Activated CD4-positive, alpha-beta T cell treated with anti-CD3 and anti-CD28 coated beads for 36 hours (primary cell): ENCODE measurements at regions of chr5 and their contacts with region 1.

Region 1: GRCh38 chr5:131382407-131383395 is 118.8 kb downstream of the CDC42SE2 start:
- DNase-seq: peak; percentile 57
- ATAC-seq: peak; percentile 67
- H3K4me3 Mint-ChIP-seq: peak overlapping the region; percentile 40
- H3K27ac Mint-ChIP-seq: peak overlapping the region; percentile 94
- H3K4me1 Mint-ChIP-seq: peaks cover 94% of the 10 kb centered on the region
- H3K27me3 Mint-ChIP-seq: no peaks in the 10 kb centered on the region

Region 2: DNA sequence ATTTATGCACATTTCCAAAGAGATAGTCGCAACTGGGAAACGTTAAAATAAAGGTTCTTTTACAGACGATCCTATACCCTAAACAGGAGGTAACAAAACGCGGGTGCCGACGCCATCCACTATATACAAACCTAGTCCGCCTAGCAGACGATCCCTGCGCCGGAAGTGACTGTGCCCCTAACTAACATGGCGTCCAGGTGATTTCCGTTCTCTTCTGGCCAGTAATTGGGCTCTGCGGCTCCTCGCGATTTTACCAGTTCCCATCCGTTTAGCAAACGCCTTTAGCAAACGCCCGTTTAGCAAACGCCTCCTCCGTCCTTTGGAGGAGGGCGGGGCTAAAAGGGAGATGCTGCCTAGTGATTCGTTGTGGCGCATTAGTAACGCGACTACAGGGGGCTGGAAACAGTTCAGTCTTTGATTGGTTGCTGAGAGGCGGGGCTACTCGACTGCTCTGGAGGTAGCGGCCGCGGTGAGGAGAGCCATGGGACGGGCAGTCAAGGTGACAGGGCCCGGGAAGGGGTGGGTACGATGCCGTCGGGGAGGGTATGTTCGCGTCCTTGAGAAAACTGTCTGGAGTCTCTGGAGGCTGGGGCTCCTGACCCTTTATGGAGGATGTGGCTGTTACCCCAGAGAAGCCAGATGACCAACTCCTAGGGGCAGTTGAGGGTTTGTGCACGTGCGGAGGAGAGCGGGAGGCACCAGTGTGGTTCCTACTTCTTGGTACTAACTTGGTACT is 212.0 kb before region 1 on chr5 and contains the start of gene LYRM7:
- CTCF ChIA-PET with region 1: interaction called, 3 read pairs
- POLR2A ChIA-PET with region 1: no interaction called
- intact Hi-C with region 1: loop called (anchors 1 to 2 kb)
- DNase-seq: peak; percentile 97
- ATAC-seq: peak; percentile 96
- H3K4me3 Mint-ChIP-seq: peak within 1 kb of the TSS; percentile 95
- H3K27ac Mint-ChIP-seq: peak within 1 kb of the TSS; percentile 93
- H3K4me1 Mint-ChIP-seq: peaks cover 34% of the 10 kb centered on the region
- H3K27me3 Mint-ChIP-seq: no peaks in the 10 kb centered on the region
- total RNA-seq, gene LYRM7: 16.0 to 20.7 TPM

Region 3: DNA sequence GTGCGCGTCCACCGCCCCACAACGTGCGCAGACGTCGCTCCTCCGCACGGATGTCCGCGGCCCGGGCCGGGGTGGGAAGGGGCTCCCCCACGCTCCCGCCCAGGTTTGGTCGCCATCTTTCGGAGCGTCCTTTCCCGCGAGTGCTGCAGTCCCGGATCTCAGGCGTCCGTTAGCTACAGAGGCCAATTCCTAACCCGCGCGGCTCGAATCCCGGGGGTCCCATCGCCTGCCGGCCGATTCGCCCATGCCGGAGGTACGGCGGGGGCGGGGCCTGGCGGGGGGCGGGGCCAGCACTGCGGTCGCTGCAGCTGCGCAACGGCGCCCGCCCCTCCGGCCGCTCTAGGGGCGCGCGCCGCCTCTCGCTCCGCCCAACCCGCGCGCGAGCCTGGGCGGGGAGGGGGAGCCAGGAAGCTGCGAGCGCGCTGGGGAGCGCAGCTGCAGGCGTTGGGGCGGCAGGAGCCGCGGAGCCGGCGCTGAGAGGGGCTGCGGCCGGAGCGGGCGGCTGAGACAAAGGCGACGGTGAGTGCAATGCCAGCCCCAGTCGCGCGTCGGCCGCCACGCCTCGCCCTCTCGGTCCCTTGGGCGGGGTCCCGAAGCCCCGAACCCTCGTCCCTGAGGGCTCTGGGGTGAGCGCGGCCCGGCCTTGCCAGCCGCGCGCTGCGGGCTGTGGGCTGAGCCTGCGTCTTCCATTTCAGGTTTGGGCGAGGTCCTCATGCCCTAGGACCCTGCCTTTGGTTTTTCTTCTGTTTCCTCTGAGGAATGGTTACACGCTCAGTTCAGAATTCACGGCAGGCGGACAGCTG is 118.9 kb before region 1 on chr5 and contains the start of gene CDC42SE2:
- CTCF ChIA-PET with region 1: interaction called, 46 read pairs
- POLR2A ChIA-PET with region 1: interaction called, 19 read pairs
- intact Hi-C with region 1: loop called in 1 of 2 experiments (anchors 1 kb)
- DNase-seq: peak; percentile 91
- ATAC-seq: peak; percentile 86
- H3K4me3 Mint-ChIP-seq: peak within 1 kb of the TSS; percentile 81
- H3K27ac Mint-ChIP-seq: peak within 1 kb of the TSS; percentile 96
- H3K4me1 Mint-ChIP-seq: peaks cover 44% of the 10 kb centered on the region
- H3K27me3 Mint-ChIP-seq: no peaks in the 10 kb centered on the region
- total RNA-seq, gene CDC42SE2: 68.3 to 99.6 TPM

Region 4: DNA sequence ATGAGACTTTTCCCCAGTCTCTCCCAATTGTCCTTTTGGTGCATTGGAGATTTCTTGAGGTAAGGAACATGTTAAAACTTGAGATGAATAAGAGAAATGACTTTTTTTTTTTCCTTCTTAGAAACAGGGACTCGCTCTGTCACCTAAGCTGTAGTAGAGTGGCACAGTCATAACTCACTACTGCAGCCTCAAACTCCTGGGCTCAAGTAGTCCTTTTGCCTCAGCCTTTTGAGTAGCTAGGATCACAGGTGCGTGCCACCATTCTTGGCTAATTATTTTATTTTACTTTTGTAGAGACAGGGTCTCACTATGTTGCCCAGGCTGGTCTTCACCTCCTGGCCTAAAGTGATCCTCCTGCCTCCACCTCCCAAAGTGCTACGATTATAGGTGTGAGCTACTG is 93.0 kb before region 1 on chr5:
- CTCF ChIA-PET with region 1: interaction called, 12 read pairs
- POLR2A ChIA-PET with region 1: interaction called, 14 read pairs
- intact Hi-C with region 1: loop called (anchors 2 kb)
- DNase-seq: peak; percentile 61
- ATAC-seq: peak; percentile 80
- H3K4me3 Mint-ChIP-seq: peak overlapping the region; percentile 64
- H3K27ac Mint-ChIP-seq: peak overlapping the region; percentile 98
- H3K4me1 Mint-ChIP-seq: peaks cover 72% of the 10 kb centered on the region
- H3K27me3 Mint-ChIP-seq: no peaks in the 10 kb centered on the region

Region 5: DNA sequence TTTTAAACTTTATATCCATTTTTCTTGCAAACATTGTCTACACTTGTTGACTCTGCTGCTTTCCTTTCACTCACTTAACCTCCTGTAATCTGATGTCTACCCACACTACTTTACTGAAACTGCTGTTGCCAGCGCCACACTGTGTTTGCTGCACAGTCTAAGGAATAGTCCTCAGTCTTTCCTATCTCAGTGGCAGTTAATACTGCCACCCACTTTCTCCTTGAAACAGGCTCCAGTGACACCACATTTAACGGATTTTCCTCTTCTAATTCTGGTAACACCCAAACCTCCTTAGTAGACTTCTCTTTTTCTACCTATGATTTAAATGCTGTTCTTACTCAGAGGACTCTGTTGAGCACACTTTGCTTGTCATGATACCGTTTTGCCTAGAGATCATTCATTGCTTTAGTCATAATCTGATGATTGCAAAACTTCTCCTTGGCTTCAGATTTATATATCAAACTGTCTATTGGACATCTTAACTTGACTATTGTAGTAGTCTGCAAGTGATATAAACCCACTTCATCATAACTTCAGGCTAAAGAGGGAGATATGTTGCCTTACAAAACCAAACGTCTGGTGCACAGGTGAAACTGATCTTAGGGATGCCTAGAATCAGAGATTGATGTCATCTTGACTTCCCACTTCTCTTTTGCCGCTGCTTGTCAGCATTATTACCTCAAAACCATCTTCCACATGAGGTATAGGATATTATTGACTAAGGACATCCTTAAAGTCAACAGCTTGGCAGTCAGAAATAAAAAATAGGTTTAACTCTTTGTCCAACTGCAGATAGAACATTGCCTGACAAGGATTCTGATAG is 24.8 kb before region 1 on chr5:
- CTCF ChIA-PET with region 1: interaction called, 13 read pairs
- POLR2A ChIA-PET with region 1: interaction called, 3 read pairs
- intact Hi-C with region 1: loop called (anchors 1 kb)
- DNase-seq: peak; percentile 66
- ATAC-seq: peak; percentile 91
- H3K4me3 Mint-ChIP-seq: peak overlapping the region; percentile 59
- H3K27ac Mint-ChIP-seq: peak overlapping the region; percentile 94
- H3K4me1 Mint-ChIP-seq: peaks cover 69% of the 10 kb centered on the region
- H3K27me3 Mint-ChIP-seq: no peaks in the 10 kb centered on the region

Region 6: DNA sequence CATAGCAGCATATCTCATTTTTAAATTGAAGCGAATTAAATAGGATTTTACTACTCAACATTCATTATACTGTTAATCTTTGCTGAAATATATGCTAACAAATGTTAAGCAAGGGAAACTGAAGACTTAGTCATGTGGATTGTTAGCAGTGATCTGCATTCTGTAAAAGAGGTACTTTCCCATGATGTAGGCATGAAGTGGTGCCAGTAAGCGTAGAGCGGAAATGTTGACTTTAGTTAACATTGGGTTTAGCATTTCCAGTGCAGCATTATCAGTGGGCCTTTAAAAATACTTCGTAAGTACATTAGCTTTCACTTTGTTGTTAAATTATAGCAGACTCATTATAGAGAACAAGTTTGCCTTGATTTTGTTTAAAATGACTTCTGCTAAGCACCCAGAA is 11.4 kb after region 1 on chr5:
- CTCF ChIA-PET with region 1: interaction called, 5 read pairs
- POLR2A ChIA-PET with region 1: interaction called, 7 read pairs
- intact Hi-C with region 1: loop called (anchors 1 kb)
- DNase-seq: peak; percentile 68
- ATAC-seq: peak; percentile 68
- H3K4me3 Mint-ChIP-seq: peak overlapping the region; percentile 65
- H3K27ac Mint-ChIP-seq: peak overlapping the region; percentile 97
- H3K4me1 Mint-ChIP-seq: peaks cover 85% of the 10 kb centered on the region
- H3K27me3 Mint-ChIP-seq: no peaks in the 10 kb centered on the region